ENCODE measurements at regions of chr3 and their contacts with region 1.

Region 1: GRCh38 chr3:182490596-182491491 is 302.5 kb upstream of the ATP11B start:
- DNase-seq: no peak
- H3K4me3 ChIP-seq: no peak overlapping the region
- H3K27ac ChIP-seq: no peak overlapping the region
- H3K4me1 ChIP-seq: no peaks in the 10 kb centered on the region
- H3K27me3 ChIP-seq: no peaks in the 10 kb centered on the region
- CTCF ChIP-seq: no peak
- EP300 ChIP-seq: no peak
- POLR2A ChIP-seq: no peak

Region 2: DNA sequence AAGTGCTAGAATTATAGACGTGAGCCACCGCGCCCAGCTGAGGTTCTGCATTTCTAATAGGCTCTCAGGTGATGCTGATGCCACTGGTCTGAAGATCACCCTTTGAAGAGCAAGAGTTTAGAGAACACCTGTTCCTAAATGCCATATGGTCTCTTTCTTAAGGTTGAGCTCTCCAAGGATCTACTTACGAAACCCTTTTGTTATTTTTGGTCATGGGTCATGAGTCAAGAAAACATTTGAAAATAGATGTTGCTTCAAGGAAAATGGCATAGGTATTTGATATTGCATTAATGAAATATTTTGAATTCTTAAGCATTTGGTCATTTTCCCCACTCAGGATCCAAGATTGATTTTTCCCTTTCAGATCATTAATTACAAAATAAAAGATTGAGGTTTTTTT is 853.8 kb before region 1 on chr3:
- intact Hi-C with region 1: no loop called
- DNase-seq: no peak
- H3K4me3 ChIP-seq: no peak overlapping the region
- H3K27ac ChIP-seq: no peak overlapping the region
- H3K4me1 ChIP-seq: no peaks in the 10 kb centered on the region
- H3K27me3 ChIP-seq: no peaks in the 10 kb centered on the region
- CTCF ChIP-seq: no peak
- EP300 ChIP-seq: no peak
- POLR2A ChIP-seq: no peak

Region 3: GRCh38 chr3:181700168-181701087 is 790.4 kb before region 1 on chr3:
- intact Hi-C with region 1: loop called (anchors 10 kb)
- DNase-seq: no peak
- H3K4me3 ChIP-seq: peak overlapping the region in 1 of 4 donors; percentile 1
- H3K27ac ChIP-seq: no peak overlapping the region
- H3K4me1 ChIP-seq: peaks cover 0 to 30% (median 19%) of the 10 kb centered on the region in 4 donors
- H3K27me3 ChIP-seq: peaks cover 65 to 100% (median 99%) of the 10 kb centered on the region in 3 donors
- CTCF ChIP-seq: peak in 3 of 4 experiments; percentile 44 to 82 (median 45)
- EP300 ChIP-seq: no peak
- POLR2A ChIP-seq: no peak

Region 4: GRCh38 chr3:182729903-182730674 is 239.2 kb after region 1 on chr3:
- intact Hi-C with region 1: no loop called
- DNase-seq: no peak
- H3K4me3 ChIP-seq: no peak overlapping the region
- H3K27ac ChIP-seq: no peak overlapping the region
- H3K4me1 ChIP-seq: no peaks in the 10 kb centered on the region
- H3K27me3 ChIP-seq: peaks cover 0 to 4% (median 0%) of the 10 kb centered on the region in 3 donors
- CTCF ChIP-seq: no peak
- EP300 ChIP-seq: no peak
- POLR2A ChIP-seq: no peak

Region 5: DNA sequence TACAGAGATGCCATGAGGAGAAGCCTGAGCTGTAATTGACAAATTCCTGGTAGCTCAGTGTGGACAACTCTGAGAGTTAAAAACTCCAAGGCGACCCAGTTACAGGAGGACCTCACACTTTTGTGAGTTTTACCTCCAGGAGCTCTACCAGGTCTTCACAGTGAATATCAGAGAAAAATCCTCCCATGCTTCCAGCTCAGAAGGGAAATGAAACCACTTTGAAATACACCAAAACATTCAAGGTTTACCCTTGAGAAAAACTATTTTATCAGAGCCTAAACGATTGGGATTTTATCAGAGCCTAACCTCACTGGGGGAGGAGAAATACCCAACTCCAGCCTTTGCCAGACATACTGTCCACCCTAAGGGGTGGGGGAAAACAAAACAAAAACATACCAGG is 556.0 kb after region 1 on chr3:
- intact Hi-C with region 1: no loop called
- DNase-seq: no peak
- H3K4me3 ChIP-seq: no peak overlapping the region
- H3K27ac ChIP-seq: no peak overlapping the region
- H3K4me1 ChIP-seq: no peaks in the 10 kb centered on the region
- H3K27me3 ChIP-seq: no peaks in the 10 kb centered on the region
- CTCF ChIP-seq: no peak
- EP300 ChIP-seq: no peak
- POLR2A ChIP-seq: no peak